PC-3 (cell line): ENCODE measurements at regions of chr2 and their contacts with region 1.

Region 1: DNA sequence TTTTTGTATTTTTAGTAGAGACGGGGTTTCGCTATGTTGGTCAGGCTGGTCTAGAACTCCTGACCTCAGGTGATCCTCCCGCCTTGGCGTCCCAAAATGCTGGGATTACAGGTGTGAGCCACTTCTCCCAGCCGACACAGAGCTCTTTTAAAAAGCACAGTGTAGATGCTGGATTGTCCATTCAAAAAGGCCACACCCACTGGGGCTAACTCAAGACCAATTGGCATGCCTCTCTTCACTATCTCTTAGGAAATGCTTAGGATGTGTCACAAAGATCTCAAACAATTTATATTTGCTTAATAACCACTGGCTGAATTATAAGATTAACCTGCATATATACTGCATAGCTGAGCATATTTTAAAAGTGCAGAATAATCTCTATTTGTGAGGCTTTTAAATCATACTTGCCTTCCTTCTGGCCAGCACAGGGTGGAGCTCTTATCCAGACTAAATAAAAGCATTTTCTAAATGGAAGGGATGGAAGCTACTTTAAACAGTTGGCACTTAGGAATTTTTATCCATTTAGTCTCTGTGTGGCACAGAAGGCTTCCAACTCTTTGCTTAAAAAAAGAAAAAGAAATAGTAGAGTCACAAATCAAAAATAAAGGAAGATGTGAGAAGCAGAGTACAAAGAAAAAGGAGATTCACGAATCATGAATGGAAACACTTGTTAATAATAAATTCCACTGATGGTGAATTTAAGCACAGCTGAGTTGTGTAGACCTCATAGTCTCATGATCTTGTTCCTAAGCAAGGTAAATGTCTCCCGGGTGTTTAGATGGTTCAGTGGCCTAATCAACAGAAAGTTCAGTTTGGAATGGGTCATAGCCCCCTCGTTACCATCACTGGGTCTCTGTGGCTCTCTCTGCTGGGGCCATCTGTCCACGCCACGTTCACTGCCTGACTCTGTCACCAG is 22.4 kb downstream of the CRYGD start:
- DNase-seq: peak; percentile 70
- ATAC-seq: peak; percentile 87
- H3K4me3 ChIP-seq: no peak overlapping the region
- H3K27ac ChIP-seq: no peak overlapping the region
- H3K4me1 ChIP-seq: 0 out of 2 replicates have a peak, but pooled peaks cover 5% of the 10 kb centered on the region
- H3K27me3 ChIP-seq: no peaks in the 10 kb centered on the region
- CTCF ChIP-seq: peak; percentile 84

Region 2: GRCh38 chr2:207951734-207952470 is 150.1 kb before region 1 on chr2:
- CTCF ChIA-PET with region 1: no interaction called
- POLR2A ChIA-PET with region 1: no interaction called
- intact Hi-C with region 1: no loop called
- DNase-seq: no peak
- ATAC-seq: no peak
- H3K4me3 ChIP-seq: no peak overlapping the region
- H3K27ac ChIP-seq: no peak overlapping the region
- H3K4me1 ChIP-seq: no peaks in the 10 kb centered on the region
- H3K27me3 ChIP-seq: no peaks in the 10 kb centered on the region
- CTCF ChIP-seq: no peak

Region 3: DNA sequence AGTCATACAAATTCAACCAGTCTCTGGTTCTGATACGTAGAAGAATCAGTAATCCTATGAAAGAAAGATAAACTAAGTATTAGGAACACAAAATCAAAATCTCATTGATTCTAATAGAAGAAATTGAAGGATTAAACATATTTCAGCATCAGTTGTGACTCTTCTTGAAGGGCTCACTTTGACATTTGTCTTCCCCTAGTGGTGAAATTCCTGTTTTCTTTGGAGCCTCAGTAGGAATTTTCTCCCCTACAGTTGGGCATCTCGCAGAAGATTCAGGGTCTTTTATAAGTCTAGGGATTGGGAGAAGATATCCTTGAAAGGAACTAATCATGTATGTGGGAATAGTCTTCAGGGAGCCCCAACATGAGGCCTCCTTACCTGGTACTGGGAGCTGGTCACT is 46.8 kb after region 1 on chr2:
- CTCF ChIA-PET with region 1: no interaction called
- POLR2A ChIA-PET with region 1: no interaction called
- intact Hi-C with region 1: loop called (anchors 2 kb)
- DNase-seq: peak; percentile 28
- ATAC-seq: no peak
- H3K4me3 ChIP-seq: no peak overlapping the region
- H3K27ac ChIP-seq: no peak overlapping the region
- H3K4me1 ChIP-seq: no peaks in the 10 kb centered on the region
- H3K27me3 ChIP-seq: no peaks in the 10 kb centered on the region
- CTCF ChIP-seq: peak; percentile 63

Region 4: DNA sequence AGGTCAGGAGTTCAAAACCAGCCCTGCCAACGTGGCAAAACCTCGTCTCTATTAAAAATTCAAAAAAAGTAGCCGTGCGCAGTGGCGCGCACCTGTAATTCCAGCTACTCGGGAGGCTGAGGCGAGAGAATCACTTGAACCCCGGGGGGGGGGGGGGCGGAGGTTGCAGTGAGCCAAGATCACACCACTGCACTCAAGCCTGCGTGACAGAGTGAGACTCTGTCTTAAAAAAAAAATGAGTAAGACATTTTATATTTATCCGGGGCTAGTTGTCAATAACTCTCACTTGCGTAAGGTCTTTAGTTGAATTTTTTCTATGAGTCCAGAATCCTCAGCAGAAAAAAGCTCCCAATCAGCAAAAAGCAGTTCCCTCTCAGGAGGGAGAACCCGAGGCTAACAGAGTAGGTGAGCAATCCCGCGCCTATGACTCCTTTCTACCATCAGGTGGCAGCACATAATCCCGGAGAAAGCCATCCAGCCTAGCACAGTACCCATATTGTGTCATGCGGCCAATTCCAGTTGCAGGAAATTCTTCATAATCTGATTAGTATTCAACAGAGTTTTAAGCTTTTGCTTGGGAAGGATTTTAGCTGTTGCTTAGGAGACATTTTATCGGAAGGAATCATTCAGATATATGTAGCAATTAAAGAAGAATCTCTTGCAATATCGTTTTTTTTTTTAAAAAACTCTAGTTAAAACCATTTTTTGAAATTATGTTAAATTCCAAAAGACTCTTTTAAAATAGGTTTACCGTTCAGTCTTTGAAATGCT is 73.3 kb after region 1 on chr2:
- CTCF ChIA-PET with region 1: interaction called, 6 read pairs
- POLR2A ChIA-PET with region 1: no interaction called
- intact Hi-C with region 1: loop called (anchors 1 kb)
- DNase-seq: peak; percentile 92
- ATAC-seq: peak; percentile 100
- H3K4me3 ChIP-seq: peak overlapping the region; percentile 44; the same call in 1 of the 2 replicates
- H3K27ac ChIP-seq: no peak overlapping the region
- H3K4me1 ChIP-seq: 0 out of 2 replicates have a peak, but pooled peaks cover 3% of the 10 kb centered on the region
- H3K27me3 ChIP-seq: peaks cover 4% of the 10 kb centered on the region; the same call in 1 of the 2 replicates
- CTCF ChIP-seq: peak; percentile 89